A673 (cell line): ENCODE measurements at regions of chr20 and their contacts with region 1.

Region 1: GRCh38 chr20:63009045-63009961 is 2.5 kb upstream of the BHLHE23 start:
- DNase-seq: peak; percentile 83
- H3K4me3 ChIP-seq: no peak overlapping the region
- H3K27ac ChIP-seq: no peak overlapping the region
- H3K4me1 ChIP-seq: peaks cover 15% of the 10 kb centered on the region
- H3K27me3 ChIP-seq: peaks cover 89% of the 10 kb centered on the region
- CTCF ChIP-seq: peak; percentile 94

Region 2: GRCh38 chr20:62822788-62823651 is 186.3 kb before region 1 on chr20:
- CTCF ChIA-PET with region 1: interaction called, 3 read pairs
- POLR2A ChIA-PET with region 1: no interaction called
- intact Hi-C with region 1: loop called (anchors 5 kb)
- DNase-seq: peak; percentile 87
- H3K4me3 ChIP-seq: no peak overlapping the region
- H3K27ac ChIP-seq: peak overlapping the region; percentile 8
- H3K4me1 ChIP-seq: peaks cover 21% of the 10 kb centered on the region
- H3K27me3 ChIP-seq: no peaks in the 10 kb centered on the region
- CTCF ChIP-seq: peak; percentile 79

Region 3: DNA sequence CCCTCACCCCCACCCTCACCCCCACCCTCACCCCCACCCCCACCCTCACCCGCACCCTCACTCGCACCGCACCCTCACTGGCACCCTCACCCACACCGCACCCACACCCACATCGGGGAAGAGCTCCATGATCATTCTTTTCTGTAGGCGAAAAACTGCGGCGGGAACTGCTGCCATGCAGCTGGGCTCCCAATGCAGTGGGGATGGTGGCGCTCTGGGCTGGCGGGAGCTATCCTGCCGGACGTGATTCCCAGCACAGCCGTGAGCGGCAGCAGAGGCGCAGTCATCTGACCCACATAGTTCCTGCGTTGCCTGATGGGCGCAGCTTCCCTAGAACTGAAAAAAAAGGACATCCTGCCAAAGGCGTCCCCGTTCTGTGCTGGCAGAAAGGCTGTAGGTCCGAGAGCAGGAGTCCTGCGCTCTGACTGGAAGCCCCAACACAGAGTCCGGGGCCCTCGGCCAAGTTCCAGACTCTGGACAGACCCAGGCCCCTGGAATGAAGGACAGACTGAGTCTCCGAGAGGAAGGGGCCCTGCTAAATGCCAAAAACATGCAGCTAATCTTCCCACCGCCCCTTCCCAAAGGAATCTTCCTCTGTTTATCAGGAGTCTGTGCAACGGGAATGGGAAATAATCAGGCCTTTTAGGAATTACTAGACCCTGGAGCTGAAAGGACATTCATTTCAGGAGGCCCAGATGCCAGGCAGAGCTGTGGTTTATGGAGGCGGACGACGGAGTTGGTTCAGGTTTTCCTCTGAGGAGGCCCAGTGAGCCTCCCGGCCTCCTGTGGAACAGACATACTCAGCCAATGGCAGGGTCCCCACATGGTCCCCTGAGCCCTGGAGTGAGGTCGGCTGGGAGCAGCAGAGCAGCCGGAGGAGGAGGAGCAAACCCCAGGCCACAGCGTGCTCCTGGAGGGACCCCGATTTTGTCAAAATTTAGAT is 133.6 kb before region 1 on chr20:
- CTCF ChIA-PET with region 1: no interaction called
- POLR2A ChIA-PET with region 1: no interaction called
- intact Hi-C with region 1: loop called (anchors 10 kb)
- DNase-seq: peak; percentile 91
- H3K4me3 ChIP-seq: no peak overlapping the region
- H3K27ac ChIP-seq: peak overlapping the region; percentile 64
- H3K4me1 ChIP-seq: peaks cover 5% of the 10 kb centered on the region
- H3K27me3 ChIP-seq: no peaks in the 10 kb centered on the region
- CTCF ChIP-seq: peak; percentile 63

Region 4: GRCh38 chr20:62900052-62900691 is 109.1 kb before region 1 on chr20:
- CTCF ChIA-PET with region 1: no interaction called
- POLR2A ChIA-PET with region 1: no interaction called
- intact Hi-C with region 1: loop called (anchors 5 kb)
- DNase-seq: peak; percentile 81
- H3K4me3 ChIP-seq: no peak overlapping the region
- H3K27ac ChIP-seq: peak overlapping the region; percentile 19
- H3K4me1 ChIP-seq: peaks cover 16% of the 10 kb centered on the region
- H3K27me3 ChIP-seq: no peaks in the 10 kb centered on the region
- CTCF ChIP-seq: peak; percentile 89

Region 5: GRCh38 chr20:62937366-62938104 is 71.8 kb before region 1 on chr20:
- CTCF ChIA-PET with region 1: no interaction called
- POLR2A ChIA-PET with region 1: no interaction called
- intact Hi-C with region 1: no loop called
- DNase-seq: peak; percentile 97
- H3K4me3 ChIP-seq: peak overlapping the region; percentile 99
- H3K27ac ChIP-seq: peak overlapping the region; percentile 98
- H3K4me1 ChIP-seq: peaks cover 20% of the 10 kb centered on the region
- H3K27me3 ChIP-seq: no peaks in the 10 kb centered on the region
- CTCF ChIP-seq: no peak

Region 6: DNA sequence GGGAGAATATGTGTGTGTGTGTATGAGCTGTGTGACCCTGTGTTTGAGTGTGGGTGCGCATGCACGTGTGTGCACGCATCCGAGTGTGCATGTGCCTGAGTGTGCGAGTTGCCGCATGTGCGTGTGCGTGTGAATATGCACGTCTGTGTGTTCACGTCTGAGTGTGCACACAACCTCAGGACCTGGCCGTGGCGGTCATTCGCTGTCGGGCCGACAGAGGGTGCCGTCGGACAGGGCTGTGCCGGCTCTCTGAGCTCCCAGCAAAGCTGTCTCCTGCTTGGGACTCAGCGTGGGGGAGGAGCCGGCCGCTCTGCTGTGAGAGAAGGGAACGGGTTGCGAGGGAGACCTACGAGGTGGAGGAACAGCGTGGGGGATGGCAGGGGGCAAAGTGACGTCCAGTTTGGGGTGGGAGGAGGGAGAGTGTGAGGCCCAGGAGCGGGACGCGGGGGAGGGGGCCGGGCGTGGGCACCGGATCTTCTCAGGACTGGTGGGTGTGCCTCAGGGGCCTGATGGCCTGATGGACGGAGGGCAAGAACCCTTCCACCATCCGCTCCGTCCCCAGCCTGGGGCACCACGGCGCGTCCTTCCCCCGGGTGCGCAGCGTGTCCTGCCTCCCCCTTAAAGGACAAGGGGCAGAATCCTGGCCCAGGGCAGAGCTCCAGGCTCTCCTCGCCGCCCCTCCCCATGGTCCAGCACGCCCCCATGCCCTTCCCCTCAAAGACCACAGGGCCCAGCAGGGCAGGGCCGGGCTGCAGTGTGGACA is 36.9 kb before region 1 on chr20:
- CTCF ChIA-PET with region 1: interaction called, 27 read pairs
- POLR2A ChIA-PET with region 1: no interaction called
- intact Hi-C with region 1: loop called (anchors 1 kb)
- DNase-seq: peak; percentile 86
- H3K4me3 ChIP-seq: no peak overlapping the region
- H3K27ac ChIP-seq: no peak overlapping the region
- H3K4me1 ChIP-seq: no peaks in the 10 kb centered on the region
- H3K27me3 ChIP-seq: peaks cover 39% of the 10 kb centered on the region
- CTCF ChIP-seq: peak; percentile 90